ENCODE measurements at regions of chr13 and their contacts with region 1.

Region 1: GRCh38 chr13:48126944-48127830 is 32.3 kb upstream of the MED4 start:
- DNase-seq: peak; percentile 46
- H3K4me3 Mint-ChIP-seq: peak overlapping the region; percentile 0
- H3K27ac Mint-ChIP-seq: peak overlapping the region; percentile 44
- H3K4me1 Mint-ChIP-seq: peaks cover 29% of the 10 kb centered on the region
- H3K27me3 Mint-ChIP-seq: no peaks in the 10 kb centered on the region

Region 2: GRCh38 chr13:47289567-47289966 is 837.6 kb before region 1 on chr13:
- CTCF ChIA-PET with region 1: no interaction called
- intact Hi-C with region 1: no loop called
- DNase-seq: no peak
- H3K4me3 Mint-ChIP-seq: no peak overlapping the region
- H3K27ac Mint-ChIP-seq: no peak overlapping the region
- H3K4me1 Mint-ChIP-seq: no peaks in the 10 kb centered on the region
- H3K27me3 Mint-ChIP-seq: no peaks in the 10 kb centered on the region

Region 3: GRCh38 chr13:47539317-47539716 is 587.9 kb before region 1 on chr13:
- CTCF ChIA-PET with region 1: no interaction called
- intact Hi-C with region 1: no loop called
- DNase-seq: no peak
- H3K4me3 Mint-ChIP-seq: no peak overlapping the region
- H3K27ac Mint-ChIP-seq: no peak overlapping the region
- H3K4me1 Mint-ChIP-seq: no peaks in the 10 kb centered on the region
- H3K27me3 Mint-ChIP-seq: no peaks in the 10 kb centered on the region

Region 4: GRCh38 chr13:47886314-47886713 is 240.9 kb before region 1 on chr13:
- CTCF ChIA-PET with region 1: no interaction called
- intact Hi-C with region 1: no loop called
- DNase-seq: no peak
- H3K4me3 Mint-ChIP-seq: no peak overlapping the region
- H3K27ac Mint-ChIP-seq: no peak overlapping the region
- H3K4me1 Mint-ChIP-seq: peaks cover 14% of the 10 kb centered on the region
- H3K27me3 Mint-ChIP-seq: no peaks in the 10 kb centered on the region

Region 5: DNA sequence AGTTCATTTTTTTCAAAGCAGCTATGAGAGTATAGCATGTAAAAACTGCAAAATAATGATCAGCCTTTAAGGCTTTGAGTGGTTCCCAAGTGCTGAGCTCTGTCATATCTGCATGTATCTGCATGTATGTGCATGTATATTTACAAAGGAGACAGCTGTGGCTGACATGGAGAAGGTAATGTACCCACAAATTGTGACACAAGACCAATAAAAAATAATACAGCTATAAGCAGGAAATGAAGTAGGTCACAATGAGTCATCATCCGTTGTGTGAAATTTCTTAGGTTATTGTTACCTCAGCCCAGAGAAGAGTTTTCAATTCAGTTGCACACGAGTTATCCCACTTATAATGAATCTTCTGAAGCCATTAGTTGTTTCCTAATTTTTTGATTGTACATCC is 28.7 kb after region 1 on chr13:
- CTCF ChIA-PET with region 1: interaction called, 7 read pairs
- intact Hi-C with region 1: loop called (anchors 1 kb)
- DNase-seq: peak; percentile 44
- H3K4me3 Mint-ChIP-seq: peak overlapping the region; percentile 74
- H3K27ac Mint-ChIP-seq: peak overlapping the region; percentile 99
- H3K4me1 Mint-ChIP-seq: peaks cover 85% of the 10 kb centered on the region
- H3K27me3 Mint-ChIP-seq: no peaks in the 10 kb centered on the region

Region 6: DNA sequence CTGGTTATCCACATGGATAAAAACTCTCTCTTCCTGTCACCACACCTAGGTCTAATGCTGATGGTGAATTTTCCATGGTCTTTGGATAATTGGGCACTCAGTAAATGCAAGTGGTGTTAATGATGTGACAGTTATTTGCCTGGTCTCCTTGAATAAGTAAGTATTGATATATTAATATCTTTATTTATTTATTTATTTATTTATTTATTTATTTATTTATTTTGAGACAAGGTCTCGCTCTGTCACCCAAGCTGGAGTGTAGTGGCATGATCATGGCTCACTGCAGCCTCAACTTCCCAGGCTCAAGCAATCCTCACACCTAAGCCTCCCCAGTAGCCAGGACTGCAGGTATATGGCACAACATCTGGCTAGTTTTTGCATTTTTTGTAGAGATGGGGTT is 59.5 kb after region 1 on chr13:
- CTCF ChIA-PET with region 1: interaction called, 6 read pairs
- intact Hi-C with region 1: loop called (anchors 1 kb)
- DNase-seq: no peak
- H3K4me3 Mint-ChIP-seq: no peak overlapping the region
- H3K27ac Mint-ChIP-seq: no peak overlapping the region
- H3K4me1 Mint-ChIP-seq: peaks cover 58% of the 10 kb centered on the region
- H3K27me3 Mint-ChIP-seq: no peaks in the 10 kb centered on the region

Region 7: GRCh38 chr13:48222358-48223301 is 95.4 kb after region 1 on chr13:
- CTCF ChIA-PET with region 1: interaction called, 4 read pairs
- intact Hi-C with region 1: loop called (anchors 1 kb)
- DNase-seq: no peak
- H3K4me3 Mint-ChIP-seq: no peak overlapping the region
- H3K27ac Mint-ChIP-seq: peak overlapping the region; percentile 5
- H3K4me1 Mint-ChIP-seq: peaks cover 55% of the 10 kb centered on the region
- H3K27me3 Mint-ChIP-seq: no peaks in the 10 kb centered on the region

Region 8: GRCh38 chr13:48334534-48335127 is 207.4 kb after region 1 on chr13:
- CTCF ChIA-PET with region 1: interaction called, 6 read pairs
- intact Hi-C with region 1: loop called (anchors 1 kb)
- DNase-seq: no peak
- H3K4me3 Mint-ChIP-seq: no peak overlapping the region
- H3K27ac Mint-ChIP-seq: no peak overlapping the region
- H3K4me1 Mint-ChIP-seq: peaks cover 3% of the 10 kb centered on the region
- H3K27me3 Mint-ChIP-seq: no peaks in the 10 kb centered on the region

Region 9: DNA sequence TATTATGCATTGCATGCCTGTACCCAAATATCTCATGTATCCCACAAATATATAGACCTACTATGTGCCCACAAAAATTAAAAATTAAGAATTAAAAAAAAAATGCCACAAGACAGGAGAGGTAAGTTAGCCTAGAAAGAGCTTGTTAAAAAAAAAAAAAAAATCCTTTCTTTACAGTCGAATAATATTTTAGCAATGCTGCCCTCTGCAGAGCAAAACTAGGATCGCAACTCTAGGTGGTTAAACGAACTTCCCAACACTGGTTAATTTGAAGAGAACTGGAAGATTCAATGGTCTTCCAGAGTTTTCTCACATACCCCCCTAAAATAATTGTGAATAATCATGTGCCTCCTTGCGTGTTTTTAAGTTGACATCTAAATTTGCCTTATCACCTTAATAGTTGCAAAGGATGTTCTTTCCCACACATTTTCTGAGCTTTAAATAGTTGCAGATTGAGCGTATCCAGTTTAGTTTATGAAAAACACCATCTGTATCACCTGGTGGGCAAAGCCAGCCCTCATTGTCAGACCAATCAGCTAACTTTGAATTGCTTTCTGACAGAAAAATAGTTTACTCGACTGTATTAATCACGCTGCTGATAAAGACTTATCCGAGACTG is 453.1 kb after region 1 on chr13:
- CTCF ChIA-PET with region 1: interaction called, 16 read pairs
- intact Hi-C with region 1: loop called (anchors 1 kb)
- DNase-seq: peak; percentile 88
- H3K4me3 Mint-ChIP-seq: no peak overlapping the region
- H3K27ac Mint-ChIP-seq: no peak overlapping the region
- H3K4me1 Mint-ChIP-seq: peaks cover 2% of the 10 kb centered on the region
- H3K27me3 Mint-ChIP-seq: peaks cover 6% of the 10 kb centered on the region